HepG2 (cell line): ENCODE measurements at regions of chr11 and their contacts with region 1.

Region 1: DNA sequence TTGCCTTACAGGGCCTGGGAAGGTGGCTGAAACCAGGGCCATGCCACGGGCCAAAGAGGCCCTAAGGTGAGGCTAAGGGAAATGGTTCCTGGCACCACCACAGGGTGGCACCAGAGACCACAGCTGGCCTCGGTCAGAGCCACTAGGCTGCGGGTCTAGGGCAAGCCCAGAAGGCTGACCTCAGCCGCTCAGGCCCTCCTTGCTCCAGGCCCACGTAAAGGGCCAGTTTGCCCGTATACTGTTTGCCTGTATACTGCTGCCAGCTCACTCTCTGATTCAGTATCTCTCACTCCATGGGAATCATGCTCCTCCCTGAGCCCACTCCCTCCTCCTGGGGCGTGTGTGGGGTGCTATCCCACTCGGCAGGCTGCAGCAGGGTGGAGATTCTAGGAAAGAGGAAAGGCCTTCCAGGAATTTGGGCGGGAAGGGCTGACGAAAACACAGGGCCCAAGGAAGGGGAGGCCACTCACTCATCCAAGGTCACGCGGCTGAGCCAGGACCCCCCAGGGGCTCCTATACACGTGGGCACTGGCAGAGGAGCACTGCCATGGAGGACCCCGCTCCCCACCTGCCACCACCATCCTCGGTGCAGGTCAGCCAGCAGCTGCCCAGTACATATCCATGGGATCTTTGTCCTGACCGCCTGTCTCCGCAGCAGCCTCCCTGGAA is 62.4 kb downstream of the NECTIN1 start:
- DNase-seq: peak; percentile 63
- ATAC-seq: peak; percentile 91
- H3K4me3 ChIP-seq: no peak overlapping the region
- H3K27ac ChIP-seq: no peak overlapping the region
- H3K4me1 ChIP-seq: peaks cover 25% of the 10 kb centered on the region
- H3K27me3 ChIP-seq: no peaks in the 10 kb centered on the region
- CTCF ChIP-seq: peak; percentile 99
- EP300 ChIP-seq: no peak
- POLR2A ChIP-seq: no peak
- RAD21 ChIP-seq: peak; percentile 99

Region 2: DNA sequence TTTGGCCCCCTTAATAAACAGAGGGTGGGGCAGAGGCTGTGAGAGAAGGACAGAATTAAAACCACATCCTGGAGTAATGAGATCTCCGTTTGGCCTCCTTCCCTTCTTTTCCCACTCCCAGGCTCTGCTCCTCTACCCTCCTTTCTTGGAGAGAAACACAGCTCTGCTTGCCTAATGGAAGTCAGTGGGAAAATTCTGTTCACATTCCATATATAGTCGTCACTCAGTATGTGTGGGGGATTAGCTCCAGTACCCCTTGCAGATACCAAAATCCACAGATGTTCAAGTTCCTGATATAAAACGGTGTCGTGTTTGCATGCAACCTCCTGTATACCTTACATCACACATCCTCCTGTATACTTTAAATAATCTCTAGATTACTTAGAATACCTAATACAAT is 206.0 kb before region 1 on chr11:
- CTCF ChIA-PET with region 1: no interaction called
- POLR2A ChIA-PET with region 1: no interaction called
- in situ Hi-C with region 1: no loop called
- intact Hi-C with region 1: no loop called
- DNase-seq: no peak
- ATAC-seq: no peak
- H3K4me3 ChIP-seq: no peak overlapping the region
- H3K27ac ChIP-seq: no peak overlapping the region
- H3K4me1 ChIP-seq: peaks cover 18% of the 10 kb centered on the region
- H3K27me3 ChIP-seq: no peaks in the 10 kb centered on the region
- CTCF ChIP-seq: no peak
- EP300 ChIP-seq: no peak
- POLR2A ChIP-seq: no peak
- RAD21 ChIP-seq: no peak

Region 3: DNA sequence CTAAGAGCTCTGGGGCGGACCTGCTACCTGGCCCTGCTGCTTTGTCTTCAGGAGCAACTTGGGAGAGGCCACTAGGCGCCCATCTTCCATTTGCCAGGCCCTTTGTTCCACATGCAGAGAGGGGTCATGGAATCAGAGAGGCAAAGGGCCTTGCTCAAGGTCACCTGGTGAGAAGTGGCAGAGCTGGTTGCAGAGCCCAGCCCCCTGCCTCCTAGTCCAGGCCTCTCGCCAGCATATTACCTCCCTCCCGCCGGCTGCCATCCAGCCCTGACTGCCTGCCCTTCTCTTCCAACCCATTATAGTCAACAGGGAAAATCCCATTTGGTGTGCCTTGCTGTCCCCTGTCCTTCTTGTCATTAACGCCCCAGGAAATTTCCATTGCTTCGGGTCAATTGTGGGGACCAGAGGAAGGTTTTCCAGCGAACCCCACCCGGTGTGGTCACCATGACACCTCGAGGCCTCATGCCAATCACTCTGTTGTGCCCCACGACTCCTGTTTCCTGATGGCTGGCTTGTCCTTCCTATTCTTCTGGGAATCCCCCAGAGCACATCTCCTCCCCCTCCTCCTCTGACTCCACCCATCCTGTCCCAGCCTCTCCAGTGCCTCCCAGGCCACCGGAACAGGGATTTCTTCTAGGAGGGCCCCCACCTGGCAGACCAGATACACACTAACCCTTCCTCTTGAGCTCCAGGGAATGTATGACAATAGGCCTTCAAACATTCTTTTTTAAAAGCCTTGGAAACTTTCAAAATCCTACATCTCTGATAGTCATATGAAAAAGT is 14.6 kb before region 1 on chr11:
- CTCF ChIA-PET with region 1: no interaction called
- POLR2A ChIA-PET with region 1: no interaction called
- in situ Hi-C with region 1: no loop called
- intact Hi-C with region 1: no loop called
- DNase-seq: no peak
- ATAC-seq: peak; percentile 27; the same call in 1 of the 3 replicates
- H3K4me3 ChIP-seq: no peak overlapping the region
- H3K27ac ChIP-seq: no peak overlapping the region
- H3K4me1 ChIP-seq: peaks cover 11% of the 10 kb centered on the region
- H3K27me3 ChIP-seq: peaks cover 2 to 12% of the 10 kb centered on the region in 2 experiments; a peak in 3 of 5 replicates
- CTCF ChIP-seq: no peak
- EP300 ChIP-seq: no peak
- POLR2A ChIP-seq: no peak
- RAD21 ChIP-seq: no peak

Region 4: DNA sequence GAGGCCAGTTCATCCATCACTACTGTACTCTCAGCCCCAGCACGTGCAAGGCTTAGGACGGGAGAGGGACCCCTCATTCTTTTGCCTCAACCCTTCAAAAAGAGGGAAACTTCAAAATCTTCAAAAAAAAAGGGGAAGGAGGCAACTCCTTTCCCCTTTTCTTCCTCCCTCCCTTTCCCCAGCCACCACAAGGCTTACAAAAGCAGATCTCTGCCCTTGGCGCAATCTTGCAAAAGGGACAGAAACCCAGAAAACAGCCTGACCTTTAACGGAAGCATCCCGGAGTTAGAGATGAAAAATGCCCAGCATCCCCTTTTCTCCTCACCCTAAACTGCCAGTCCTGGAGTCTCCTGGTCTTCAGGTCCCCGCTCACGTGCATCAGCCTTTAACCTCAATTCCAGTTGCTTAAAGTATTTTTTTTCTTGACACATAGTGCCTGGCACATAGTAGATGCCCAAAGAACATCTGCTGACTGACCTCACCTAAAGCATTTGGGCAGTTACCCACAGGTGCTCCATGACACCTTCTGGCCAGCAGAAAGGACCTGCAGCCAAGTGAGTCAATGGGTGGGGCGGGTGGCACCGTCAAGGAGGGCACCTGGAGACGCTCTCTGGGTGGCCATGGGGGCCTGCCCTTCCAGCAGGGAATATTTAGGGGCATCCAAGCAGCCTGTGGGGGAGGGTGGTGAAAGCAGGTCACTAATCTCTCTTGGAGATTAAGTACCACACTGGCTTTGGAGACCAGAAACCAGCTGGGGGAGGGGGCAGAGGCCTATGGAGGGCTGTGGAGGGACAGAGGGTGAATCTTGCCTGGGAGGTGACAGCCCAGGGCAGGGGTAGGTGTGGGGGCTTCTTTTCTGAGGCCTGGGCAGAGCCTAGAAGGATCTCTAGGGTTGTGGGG is 46.1 kb after region 1 on chr11:
- CTCF ChIA-PET with region 1: no interaction called
- POLR2A ChIA-PET with region 1: interaction called, 11 read pairs
- in situ Hi-C with region 1: no loop called
- intact Hi-C with region 1: no loop called
- DNase-seq: no peak
- ATAC-seq: peak; percentile 53
- H3K4me3 ChIP-seq: peak overlapping the region; percentile 20 to 63 (median 32); a peak in 4 of 6 replicates
- H3K27ac ChIP-seq: peak overlapping the region; percentile 45
- H3K4me1 ChIP-seq: peaks cover 75% of the 10 kb centered on the region
- H3K27me3 ChIP-seq: no peaks in the 10 kb centered on the region
- CTCF ChIP-seq: 0 out of 2 replicates have a peak, but pooled peaks have one; percentile 10
- EP300 ChIP-seq: no peak
- POLR2A ChIP-seq: peak in 1 of 2 experiments; percentile 42; a peak in 1 of 4 replicates
- RAD21 ChIP-seq: no peak

Region 5: GRCh38 chr11:119741369-119742262 is 75.0 kb after region 1 on chr11:
- CTCF ChIA-PET with region 1: interaction called, 14 read pairs
- POLR2A ChIA-PET with region 1: no interaction called
- in situ Hi-C with region 1: no loop called
- intact Hi-C with region 1: loop called (anchors 1 kb)
- DNase-seq: peak; percentile 21
- ATAC-seq: peak; percentile 95
- H3K4me3 ChIP-seq: peak overlapping the region in 2 of 3 experiments; percentile 33 to 61; a peak in 4 of 6 replicates
- H3K27ac ChIP-seq: no peak overlapping the region
- H3K4me1 ChIP-seq: peaks cover 18% of the 10 kb centered on the region
- H3K27me3 ChIP-seq: peaks cover 10 to 73% of the 10 kb centered on the region in 2 experiments; a peak in 4 of 5 replicates
- CTCF ChIP-seq: peak; percentile 92
- EP300 ChIP-seq: no peak
- POLR2A ChIP-seq: no peak
- RAD21 ChIP-seq: peak; percentile 79

Region 6: DNA sequence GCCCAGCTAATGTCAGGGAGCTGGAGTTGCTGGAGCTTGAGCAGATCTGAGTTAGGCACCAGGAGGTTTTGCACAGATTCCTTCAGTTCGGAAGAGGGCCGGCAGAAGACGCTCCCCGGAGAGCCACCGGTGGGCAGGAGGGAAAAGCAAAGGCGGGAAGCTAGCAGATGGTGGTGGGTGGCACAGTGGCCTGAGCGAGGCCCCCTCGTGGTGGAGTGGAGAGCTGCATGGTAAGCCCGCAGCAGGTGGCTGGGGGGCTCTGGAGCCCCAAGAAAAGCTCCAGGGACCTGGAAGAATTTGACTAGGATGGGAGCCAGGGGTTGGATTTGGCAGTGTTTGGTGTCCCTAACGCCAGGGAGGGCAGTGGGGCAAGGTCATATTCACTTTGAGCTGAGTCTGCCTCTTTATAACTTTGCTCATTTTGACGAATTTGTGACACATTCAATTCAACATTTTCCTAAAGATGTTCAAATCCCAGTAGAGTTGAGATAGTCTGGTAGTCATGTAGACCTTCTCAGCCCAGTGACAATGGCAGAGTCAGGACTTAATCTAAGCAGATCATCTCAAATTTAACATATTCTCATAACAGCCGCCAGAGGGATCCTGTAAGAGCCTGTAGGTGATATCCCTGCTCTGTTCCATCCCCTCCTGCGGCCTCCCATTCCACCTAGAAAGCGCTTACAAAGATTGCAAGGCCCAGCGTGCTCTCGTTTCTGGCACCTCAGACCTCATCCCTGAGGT is 413.3 kb after region 1 on chr11:
- CTCF ChIA-PET with region 1: interaction called, 4 read pairs
- POLR2A ChIA-PET with region 1: no interaction called
- in situ Hi-C with region 1: no loop called
- intact Hi-C with region 1: loop called (anchors 10 kb)
- DNase-seq: peak; percentile 34
- ATAC-seq: peak; percentile 93
- H3K4me3 ChIP-seq: no peak overlapping the region
- H3K27ac ChIP-seq: no peak overlapping the region
- H3K4me1 ChIP-seq: no peaks in the 10 kb centered on the region
- H3K27me3 ChIP-seq: peaks cover 4 to 34% of the 10 kb centered on the region in 2 experiments; a peak in 4 of 5 replicates
- CTCF ChIP-seq: peak; percentile 70
- EP300 ChIP-seq: no peak
- POLR2A ChIP-seq: no peak
- RAD21 ChIP-seq: no peak; the same call in 1 of the 2 replicates

Region 7: GRCh38 chr11:120182790-120183491 is 516.3 kb after region 1 on chr11:
- CTCF ChIA-PET with region 1: no interaction called
- POLR2A ChIA-PET with region 1: no interaction called
- in situ Hi-C with region 1: no loop called
- intact Hi-C with region 1: loop called (anchors 10 kb)
- DNase-seq: peak; percentile 73
- ATAC-seq: peak; percentile 53
- H3K4me3 ChIP-seq: peak overlapping the region in 1 of 3 experiments; percentile 41; a peak in 1 of 6 replicates
- H3K27ac ChIP-seq: peak overlapping the region; percentile 51
- H3K4me1 ChIP-seq: peaks cover 82% of the 10 kb centered on the region
- H3K27me3 ChIP-seq: no peaks in the 10 kb centered on the region
- CTCF ChIP-seq: peak; percentile 89
- EP300 ChIP-seq: no peak
- POLR2A ChIP-seq: no peak
- RAD21 ChIP-seq: peak; percentile 63